ENCODE measurements at regions of chr13 and their contacts with region 1.

Region 1: DNA sequence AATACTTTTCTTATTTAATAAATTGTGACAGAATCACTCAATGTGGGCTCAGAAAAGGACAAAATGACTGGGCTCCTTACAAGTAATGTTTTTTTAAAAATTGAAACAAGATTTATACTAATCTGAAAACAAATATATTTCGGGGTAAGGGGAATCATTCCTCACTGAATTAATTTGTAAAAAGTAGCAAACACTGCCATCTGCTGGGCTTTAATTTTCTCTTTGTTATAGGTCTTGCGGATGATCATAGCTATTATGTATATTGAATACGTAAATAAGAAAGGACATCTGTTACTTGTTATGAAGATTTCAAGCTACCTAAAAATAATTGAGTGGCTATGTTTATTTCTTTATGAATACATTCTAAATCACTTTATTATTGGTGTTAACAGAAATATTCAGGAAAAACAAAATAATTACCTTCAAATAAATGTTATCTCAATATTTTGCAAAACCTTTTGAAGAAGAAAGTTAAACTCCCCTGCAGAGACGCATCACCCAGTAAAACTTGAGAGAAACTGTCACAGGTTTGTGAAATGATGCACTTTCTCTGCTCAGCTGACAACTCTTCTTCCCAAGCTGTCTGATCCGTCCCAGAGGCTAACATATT is 17.8 kb upstream of the ENOX1 start:
- DNase-seq: no peak
- H3K4me3 ChIP-seq: peak overlapping the region; percentile 32
- CTCF ChIP-seq: peak; percentile 18

Region 2: DNA sequence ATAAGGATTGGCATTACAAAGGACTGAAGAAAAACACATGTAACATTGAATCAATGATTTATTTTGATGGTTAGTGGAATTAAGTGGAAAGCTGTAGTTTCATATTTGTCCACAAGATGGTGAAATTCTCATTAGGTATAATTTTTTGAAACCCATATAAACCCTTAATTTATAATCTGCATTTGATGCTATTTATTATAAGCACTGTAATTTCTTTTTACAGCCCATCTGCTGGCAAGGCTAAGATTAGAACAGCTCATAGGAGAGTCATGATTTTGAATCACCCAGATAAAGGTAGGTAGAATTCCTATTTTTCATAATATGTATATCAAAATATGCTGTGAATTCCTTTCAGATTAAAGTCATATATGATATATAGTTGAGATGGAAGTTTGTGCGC is 719.0 kb before region 1 on chr13:
- CTCF ChIA-PET with region 1: interaction called, 55 read pairs
- POLR2A ChIA-PET with region 1: no interaction called
- DNase-seq: no peak
- H3K4me3 ChIP-seq: no peak overlapping the region
- CTCF ChIP-seq: no peak

Region 3: GRCh38 chr13:43786773-43787517 is 17.6 kb before region 1 on chr13 and contains the start of gene ENOX1:
- CTCF ChIA-PET with region 1: interaction called, 23 read pairs
- POLR2A ChIA-PET with region 1: interaction called, 3 read pairs
- DNase-seq: no peak
- H3K4me3 ChIP-seq: peak within 1 kb of the TSS; percentile 72
- CTCF ChIP-seq: peak; percentile 43

Region 4: DNA sequence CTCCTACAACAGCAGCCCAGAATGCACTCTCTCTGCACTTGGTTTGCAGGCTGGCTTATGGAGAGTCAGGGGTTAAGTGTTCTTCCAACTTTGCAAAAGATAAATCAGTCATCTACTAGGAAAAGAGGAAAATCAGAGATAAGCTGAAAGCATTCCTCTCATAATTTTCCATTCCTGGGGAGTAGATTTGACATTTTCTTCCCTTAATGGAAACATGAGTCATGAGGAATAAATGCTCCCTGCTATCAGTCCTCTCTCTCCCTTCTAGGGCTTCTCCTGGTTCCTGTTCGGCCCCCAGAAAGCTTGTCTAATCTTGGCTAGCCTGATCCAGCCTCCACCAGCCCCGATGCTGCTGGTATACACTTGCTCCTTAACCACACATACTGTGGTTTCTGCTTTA is 10.6 kb after region 1 on chr13:
- CTCF ChIA-PET with region 1: interaction called, 40 read pairs
- POLR2A ChIA-PET with region 1: no interaction called
- DNase-seq: no peak
- H3K4me3 ChIP-seq: no peak overlapping the region
- CTCF ChIP-seq: no peak

Region 5: DNA sequence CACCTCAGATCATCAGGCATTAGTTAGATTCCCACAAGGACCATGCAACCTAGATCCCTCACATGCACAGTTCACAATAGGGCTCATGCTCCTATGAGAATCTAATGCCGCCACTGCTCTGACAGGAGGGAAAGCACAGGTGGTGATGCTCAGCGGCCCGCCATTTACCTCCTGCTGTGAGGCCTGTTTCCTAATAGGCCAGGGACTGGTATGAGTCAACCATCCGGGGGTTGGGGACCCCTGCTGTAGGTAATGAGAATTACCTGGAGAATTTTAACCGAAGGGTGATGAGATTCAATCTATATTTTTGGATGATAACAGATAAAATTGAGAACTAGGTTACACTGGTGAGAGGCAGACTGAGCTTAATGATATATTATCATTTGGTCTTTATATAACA is 176.5 kb after region 1 on chr13:
- CTCF ChIA-PET with region 1: no interaction called
- POLR2A ChIA-PET with region 1: no interaction called
- DNase-seq: no peak
- H3K4me3 ChIP-seq: no peak overlapping the region
- CTCF ChIP-seq: no peak

Region 6: DNA sequence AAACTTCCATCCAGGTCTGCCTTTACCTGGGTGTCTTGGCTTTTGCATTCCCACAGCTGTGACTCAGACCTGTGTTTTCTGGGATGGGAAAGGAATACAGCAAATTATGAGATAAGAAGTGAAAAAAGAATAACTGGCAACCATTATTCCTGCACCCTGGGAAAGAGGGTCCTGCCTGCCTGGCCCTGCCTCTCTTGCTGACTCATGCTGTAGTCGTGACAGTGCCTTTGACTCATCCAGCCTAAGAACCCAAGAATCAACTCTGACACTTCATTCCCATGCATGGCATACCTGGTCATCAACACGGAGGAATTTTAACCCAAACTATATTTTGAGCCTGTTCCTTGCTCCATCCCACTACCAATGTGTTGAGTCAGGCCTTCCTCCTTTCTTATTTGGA is 383.7 kb after region 1 on chr13:
- CTCF ChIA-PET with region 1: no interaction called
- POLR2A ChIA-PET with region 1: no interaction called
- DNase-seq: no peak
- H3K4me3 ChIP-seq: no peak overlapping the region
- CTCF ChIP-seq: no peak

Measured in AG04449 (cell line).